Activated CD4-positive, alpha-beta T cell treated with anti-CD3 and anti-CD28 coated beads, Interleukin-2, amount 10 ng/mL, durations not matched to agents 24 days and 14 days (primary cell): ENCODE measurements at regions of chr6 and their contacts with region 1.

Region 1: GRCh38 chr6:25942561-25943147 is 12.2 kb upstream of the SLC17A2 start:
- DNase-seq: peak; percentile 72
- H3K4me3 Mint-ChIP-seq: no peak overlapping the region
- H3K27ac Mint-ChIP-seq: no peak overlapping the region
- H3K4me1 Mint-ChIP-seq: peaks cover 24% of the 10 kb centered on the region
- H3K27me3 Mint-ChIP-seq: no peaks in the 10 kb centered on the region

Region 2: DNA sequence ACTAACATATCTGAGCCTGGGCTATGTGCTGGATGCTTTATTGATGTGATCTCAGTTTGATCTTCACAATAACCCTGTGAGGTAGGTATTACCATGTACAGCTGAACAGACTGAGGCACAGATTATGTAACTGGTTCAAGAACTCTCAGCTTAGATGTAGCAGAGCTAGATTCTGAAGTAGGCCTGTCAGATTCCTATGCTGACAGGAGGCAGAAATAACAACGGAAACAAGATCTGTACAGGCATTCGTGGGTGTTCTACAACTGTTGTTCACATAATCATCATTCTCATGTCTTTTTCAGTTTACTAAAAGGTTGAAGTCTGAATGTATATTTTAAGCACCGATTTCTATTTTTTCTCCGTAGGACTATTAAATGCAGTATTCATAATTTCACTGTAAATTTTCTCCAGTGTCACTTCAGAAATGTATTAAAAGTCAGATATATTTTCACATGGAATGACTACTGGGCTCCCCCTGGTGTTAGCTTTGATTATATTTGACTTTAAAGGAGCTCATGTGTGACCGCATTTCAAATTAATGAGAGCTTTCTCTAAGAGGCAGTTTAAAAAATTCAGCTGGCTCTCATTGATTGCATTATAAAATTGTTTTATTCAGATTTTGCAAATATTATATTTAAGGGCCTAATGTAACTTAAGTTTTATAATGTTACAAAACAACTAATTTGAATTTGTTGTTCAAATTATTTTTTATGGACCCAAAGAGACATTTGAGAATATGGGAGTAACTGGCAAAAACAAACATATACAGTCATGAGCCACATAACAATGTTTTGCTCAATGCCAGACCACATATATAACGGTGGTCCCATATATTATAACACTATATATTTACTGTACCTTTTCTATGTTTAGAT is 224.6 kb before region 1 on chr6:
- intact Hi-C with region 1: loop called (anchors 1 kb)
- DNase-seq: peak; percentile 56
- H3K4me3 Mint-ChIP-seq: no peak overlapping the region
- H3K27ac Mint-ChIP-seq: no peak overlapping the region
- H3K4me1 Mint-ChIP-seq: peaks cover 5% of the 10 kb centered on the region
- H3K27me3 Mint-ChIP-seq: peaks cover 21% of the 10 kb centered on the region

Region 3: DNA sequence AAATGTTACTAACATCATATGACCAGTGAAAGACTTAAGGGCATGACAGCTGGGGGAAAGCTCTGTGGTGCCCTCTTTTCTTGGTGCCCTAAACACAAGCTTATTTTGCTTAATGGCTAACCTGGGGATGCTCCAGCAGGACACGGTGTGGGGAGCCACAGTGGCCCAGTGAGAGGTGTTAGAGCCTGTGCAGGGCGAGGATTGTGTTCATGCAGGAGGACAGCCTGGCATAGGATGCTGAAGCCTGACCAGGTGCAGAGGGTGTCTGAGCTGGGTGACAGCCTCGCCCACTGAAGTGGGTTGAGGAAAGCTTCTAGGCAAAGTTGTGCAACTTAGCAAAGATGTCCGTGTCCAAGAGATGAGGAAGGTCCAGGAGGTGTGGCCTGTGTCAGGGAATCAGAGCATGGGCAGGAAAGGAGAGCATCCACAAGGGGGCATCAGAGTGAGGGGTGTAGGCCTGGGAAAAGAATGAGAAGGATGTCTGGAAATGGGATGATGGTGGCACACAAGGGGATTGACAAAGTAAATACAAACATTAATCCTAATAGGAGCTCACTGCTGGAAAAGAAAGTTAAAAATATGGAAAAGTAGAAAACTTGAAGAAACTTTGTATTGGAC is 154.2 kb before region 1 on chr6:
- intact Hi-C with region 1: loop called (anchors 2 kb)
- DNase-seq: peak; percentile 82
- H3K4me3 Mint-ChIP-seq: no peak overlapping the region
- H3K27ac Mint-ChIP-seq: no peak overlapping the region
- H3K4me1 Mint-ChIP-seq: no peaks in the 10 kb centered on the region
- H3K27me3 Mint-ChIP-seq: no peaks in the 10 kb centered on the region

Region 4: DNA sequence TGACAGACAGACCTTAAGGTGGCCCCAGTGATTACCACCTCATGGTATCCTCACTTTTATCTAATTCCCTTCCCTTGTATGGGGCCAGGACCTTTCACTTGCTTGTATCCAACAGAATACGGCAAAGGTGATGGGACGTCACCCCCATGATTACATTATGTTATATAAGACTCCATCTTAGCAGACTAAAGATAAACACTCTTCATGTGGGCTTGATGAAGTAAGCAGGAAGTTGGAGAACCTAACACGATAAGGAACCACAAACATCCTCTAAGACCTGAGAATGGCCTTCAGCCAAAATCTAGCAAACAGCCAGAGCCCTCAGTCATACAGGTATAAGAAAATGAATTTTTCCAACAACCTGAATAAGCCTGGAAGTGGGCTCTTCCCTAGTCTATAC is 76.6 kb before region 1 on chr6:
- intact Hi-C with region 1: loop called (anchors 5 kb)
- DNase-seq: peak; percentile 79
- H3K4me3 Mint-ChIP-seq: peak overlapping the region; percentile 16
- H3K27ac Mint-ChIP-seq: no peak overlapping the region
- H3K4me1 Mint-ChIP-seq: peaks cover 28% of the 10 kb centered on the region
- H3K27me3 Mint-ChIP-seq: peaks cover under 1% of the 10 kb centered on the region

Region 5: GRCh38 chr6:25913741-25914140 is 28.9 kb before region 1 on chr6:
- intact Hi-C with region 1: loop called (anchors 5 kb)
- DNase-seq: no peak
- H3K4me3 Mint-ChIP-seq: no peak overlapping the region
- H3K27ac Mint-ChIP-seq: peak overlapping the region; percentile 73
- H3K4me1 Mint-ChIP-seq: peaks cover 16% of the 10 kb centered on the region
- H3K27me3 Mint-ChIP-seq: no peaks in the 10 kb centered on the region

Region 6: DNA sequence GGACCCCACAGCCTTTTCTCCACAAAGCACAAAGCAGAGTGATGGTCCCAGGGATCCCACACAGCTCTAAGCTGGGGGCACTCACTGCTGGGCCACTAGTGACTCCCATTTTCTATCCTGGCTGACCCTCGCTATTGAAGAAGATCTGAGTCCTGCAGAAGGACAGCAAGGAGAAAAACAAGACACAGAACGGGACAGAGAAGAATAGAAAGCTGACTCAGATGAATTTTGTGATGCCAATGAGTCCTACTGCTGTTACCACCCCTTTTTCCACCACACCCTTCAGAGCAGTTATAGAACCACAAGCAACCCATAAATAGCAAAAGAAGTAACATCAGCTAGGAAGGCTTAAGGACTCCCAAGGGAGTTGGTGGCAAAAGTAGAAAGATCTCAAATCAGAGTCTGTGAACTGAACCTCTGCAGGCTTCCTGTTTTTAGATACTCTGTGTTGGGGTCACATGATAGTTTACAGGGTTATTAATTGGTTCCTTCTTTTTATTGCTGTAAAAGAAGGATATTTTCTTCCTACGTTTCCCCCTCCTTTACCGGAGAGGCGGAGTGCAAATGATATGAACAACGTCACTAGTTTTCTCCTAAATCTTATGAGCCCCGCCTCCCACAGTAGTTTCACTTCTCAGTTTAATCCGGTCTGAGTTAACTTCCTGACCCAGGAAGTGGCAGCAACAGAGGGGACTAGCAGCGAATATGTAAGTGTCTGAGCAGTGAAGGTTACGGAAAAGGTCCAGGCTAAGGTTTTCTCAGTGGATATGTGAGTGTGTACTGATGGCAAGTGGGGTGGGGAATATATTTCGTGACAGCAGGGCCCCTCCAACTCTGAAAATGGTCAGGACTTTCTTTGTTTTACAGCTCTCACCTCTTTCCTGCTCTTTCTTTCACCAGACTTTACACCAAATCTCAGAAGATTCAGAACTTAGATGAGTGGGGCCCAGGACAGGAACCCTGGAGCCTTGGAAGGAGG is 19.8 kb after region 1 on chr6 and contains the start of gene TRIM38:
- intact Hi-C with region 1: loop called (anchors 1 kb)
- DNase-seq: peak; percentile 94
- H3K4me3 Mint-ChIP-seq: peak within 1 kb of the TSS; percentile 88
- H3K27ac Mint-ChIP-seq: peak within 1 kb of the TSS; percentile 96
- H3K4me1 Mint-ChIP-seq: peaks cover 75% of the 10 kb centered on the region
- H3K27me3 Mint-ChIP-seq: no peaks in the 10 kb centered on the region
- total RNA-seq, gene TRIM38: 23.0 and 24.5 TPM in 2 replicates

Region 7: GRCh38 chr6:25992413-25993037 is 49.9 kb after region 1 on chr6:
- intact Hi-C with region 1: loop called (anchors 1 kb)
- DNase-seq: peak; percentile 99
- H3K4me3 Mint-ChIP-seq: peak overlapping the region; percentile 98
- H3K27ac Mint-ChIP-seq: peak overlapping the region; percentile 95
- H3K4me1 Mint-ChIP-seq: peaks cover 22% of the 10 kb centered on the region
- H3K27me3 Mint-ChIP-seq: no peaks in the 10 kb centered on the region